ENCODE measurements at regions of chr9 and their contacts with region 1.

Region 1: GRCh38 chr9:131739980-131740648 is at the start of gene RAPGEF1:
- DNase-seq: peak; percentile 85
- CTCF ChIP-seq: peak; percentile 100

Region 2: DNA sequence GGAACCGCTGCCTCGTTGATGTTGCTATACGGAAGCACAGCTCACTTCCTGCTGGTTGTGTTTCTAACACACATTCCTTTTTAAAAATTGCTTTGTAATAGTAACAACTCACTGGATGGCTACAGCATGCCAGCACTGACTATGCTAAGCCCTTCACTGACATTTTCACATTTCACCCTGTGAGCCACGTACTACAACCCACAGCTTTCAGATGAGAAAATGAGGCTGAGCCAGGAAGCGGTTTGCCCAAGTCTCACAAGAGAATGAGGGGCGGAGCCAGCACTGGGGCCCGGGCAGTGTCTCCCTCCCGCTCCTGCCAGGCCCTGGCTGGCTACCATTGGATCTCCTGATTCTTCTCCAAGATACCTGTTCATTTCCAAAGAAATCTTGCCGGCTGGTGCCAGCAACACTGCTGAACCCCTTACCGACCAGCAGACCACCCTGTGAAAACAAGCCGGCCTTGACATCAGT is 502.1 kb before region 1 on chr9:
- CTCF ChIA-PET with region 1: no interaction called
- POLR2A ChIA-PET with region 1: no interaction called
- DNase-seq: peak; percentile 86
- CTCF ChIP-seq: no peak

Region 3: GRCh38 chr9:131621551-131622358 is 118.4 kb before region 1 on chr9:
- CTCF ChIA-PET with region 1: interaction called, 23 read pairs
- POLR2A ChIA-PET with region 1: no interaction called
- DNase-seq: peak; percentile 71
- CTCF ChIP-seq: no peak

Region 4: GRCh38 chr9:131645078-131645776 is 94.9 kb before region 1 on chr9:
- CTCF ChIA-PET with region 1: interaction called, 12 read pairs
- POLR2A ChIA-PET with region 1: interaction called, 4 read pairs
- DNase-seq: no peak
- CTCF ChIP-seq: no peak

Region 5: GRCh38 chr9:131722009-131722629 is 18.0 kb before region 1 on chr9:
- CTCF ChIA-PET with region 1: interaction called, 84 read pairs
- POLR2A ChIA-PET with region 1: interaction called, 7 read pairs
- DNase-seq: no peak
- CTCF ChIP-seq: no peak